A673 (cell line): ENCODE measurements at regions of chr6 and their contacts with region 1.

Region 1: GRCh38 chr6:166950443-166950821 is 5.9 kb downstream of the RNASET2 start:
- DNase-seq: no peak
- H3K4me3 ChIP-seq: no peak overlapping the region
- H3K27ac ChIP-seq: no peak overlapping the region
- H3K4me1 ChIP-seq: no peaks in the 10 kb centered on the region
- H3K27me3 ChIP-seq: no peaks in the 10 kb centered on the region
- CTCF ChIP-seq: no peak

Region 2: GRCh38 chr6:166156942-166157341 is 793.5 kb before region 1 on chr6:
- CTCF ChIA-PET with region 1: interaction called, 10 read pairs
- POLR2A ChIA-PET with region 1: no interaction called
- intact Hi-C with region 1: no loop called
- DNase-seq: peak; percentile 35
- H3K4me3 ChIP-seq: no peak overlapping the region
- H3K27ac ChIP-seq: no peak overlapping the region
- H3K4me1 ChIP-seq: no peaks in the 10 kb centered on the region
- H3K27me3 ChIP-seq: peaks cover 10% of the 10 kb centered on the region
- CTCF ChIP-seq: peak; percentile 54

Region 3: GRCh38 chr6:166466178-166467122 is 484.0 kb before region 1 on chr6:
- CTCF ChIA-PET with region 1: no interaction called
- POLR2A ChIA-PET with region 1: no interaction called
- intact Hi-C with region 1: loop called (anchors 5 kb)
- DNase-seq: no peak
- H3K4me3 ChIP-seq: no peak overlapping the region
- H3K27ac ChIP-seq: no peak overlapping the region
- H3K4me1 ChIP-seq: no peaks in the 10 kb centered on the region
- H3K27me3 ChIP-seq: no peaks in the 10 kb centered on the region
- CTCF ChIP-seq: no peak

Region 4: GRCh38 chr6:166786704-166787293 is 163.6 kb before region 1 on chr6:
- CTCF ChIA-PET with region 1: no interaction called
- POLR2A ChIA-PET with region 1: interaction called, 3 read pairs
- intact Hi-C with region 1: loop called (anchors 2 kb)
- DNase-seq: peak; percentile 79
- H3K4me3 ChIP-seq: no peak overlapping the region
- H3K27ac ChIP-seq: no peak overlapping the region
- H3K4me1 ChIP-seq: no peaks in the 10 kb centered on the region
- H3K27me3 ChIP-seq: no peaks in the 10 kb centered on the region
- CTCF ChIP-seq: peak; percentile 79